Activated T-helper 1 cell treated with anti-CD3 and anti-CD28 coated beads, Interleukin-12 subunit alpha, Interleukin-12 subunit beta, Interleukin-2, Interleukin-4 antibody, amounts not matched to agents 30 ng/mL and 10 ng/mL and 1 ng/mL, durations not matched to agents 14 hours and 24 hours and 36 hours (primary cell): ENCODE measurements at regions of chr12 and their contacts with region 1.

Region 1: GRCh38 chr12:45990468-45991283 is at the start of gene SCAF11:
- DNase-seq: peak; percentile 100
- H3K4me3 Mint-ChIP-seq: peak within 1 kb of the TSS; percentile 95
- H3K27ac Mint-ChIP-seq: peak within 1 kb of the TSS; percentile 98
- H3K4me1 Mint-ChIP-seq: peaks cover 47% of the 10 kb centered on the region
- H3K27me3 Mint-ChIP-seq: peaks cover 3% of the 10 kb centered on the region
- total RNA-seq, gene SCAF11: 125 and 131 TPM in 2 replicates

Region 2: DNA sequence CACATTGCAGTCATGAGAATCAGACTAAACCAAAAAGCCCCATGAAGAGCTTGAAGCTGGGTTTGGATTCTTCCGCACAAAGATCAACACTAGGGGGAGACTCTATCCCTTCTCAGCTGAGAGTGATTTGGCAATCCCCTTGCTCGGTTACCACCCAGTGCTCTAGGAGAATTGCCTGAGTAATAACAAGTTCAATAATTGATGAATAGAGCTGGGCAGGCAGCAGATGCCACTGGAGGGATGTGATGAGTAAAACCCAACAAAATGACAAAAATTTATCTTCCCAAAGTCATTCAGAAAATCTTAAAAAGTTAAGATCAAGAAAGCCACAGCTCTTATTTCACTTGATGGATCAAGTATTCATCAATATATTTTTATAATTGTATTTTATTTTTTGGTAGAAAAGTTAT is 446.8 kb before region 1 on chr12:
- intact Hi-C with region 1: loop called (anchors 5 kb)
- DNase-seq: peak; percentile 45
- H3K4me3 Mint-ChIP-seq: no peak overlapping the region
- H3K27ac Mint-ChIP-seq: no peak overlapping the region
- H3K4me1 Mint-ChIP-seq: no peaks in the 10 kb centered on the region
- H3K27me3 Mint-ChIP-seq: peaks cover 4% of the 10 kb centered on the region

Region 3: GRCh38 chr12:45973526-45973925 is 17.1 kb before region 1 on chr12:
- intact Hi-C with region 1: loop called (anchors 2 kb)
- DNase-seq: no peak
- H3K4me3 Mint-ChIP-seq: no peak overlapping the region
- H3K27ac Mint-ChIP-seq: peak overlapping the region; percentile 10
- H3K4me1 Mint-ChIP-seq: peaks cover 60% of the 10 kb centered on the region
- H3K27me3 Mint-ChIP-seq: no peaks in the 10 kb centered on the region

Region 4: GRCh38 chr12:46268590-46269558 is 278.2 kb after region 1 on chr12 and contains the start of gene SLC38A1:
- intact Hi-C with region 1: loop called (anchors 1 kb)
- DNase-seq: peak; percentile 85
- H3K4me3 Mint-ChIP-seq: no peak within 1 kb of the TSS
- H3K27ac Mint-ChIP-seq: no peak within 1 kb of the TSS
- H3K4me1 Mint-ChIP-seq: peaks cover 28% of the 10 kb centered on the region
- H3K27me3 Mint-ChIP-seq: no peaks in the 10 kb centered on the region
- total RNA-seq, gene SLC38A1: 172 and 182 TPM in 2 replicates

Region 5: GRCh38 chr12:46546634-46547286 is 556.1 kb after region 1 on chr12:
- intact Hi-C with region 1: loop called (anchors 5 kb)
- DNase-seq: peak; percentile 19
- H3K4me3 Mint-ChIP-seq: peak overlapping the region; percentile 34
- H3K27ac Mint-ChIP-seq: peak overlapping the region; percentile 89
- H3K4me1 Mint-ChIP-seq: peaks cover 58% of the 10 kb centered on the region
- H3K27me3 Mint-ChIP-seq: no peaks in the 10 kb centered on the region

Region 6: GRCh38 chr12:47307680-47308399 is 1317.2 kb after region 1 on chr12:
- intact Hi-C with region 1: loop called (anchors 5 kb)
- DNase-seq: peak; percentile 43
- H3K4me3 Mint-ChIP-seq: peak overlapping the region; percentile 91
- H3K27ac Mint-ChIP-seq: peak overlapping the region; percentile 87
- H3K4me1 Mint-ChIP-seq: peaks cover 69% of the 10 kb centered on the region
- H3K27me3 Mint-ChIP-seq: no peaks in the 10 kb centered on the region